ENCODE measurements at regions of chr19 and their contacts with region 1.

Region 1: DNA sequence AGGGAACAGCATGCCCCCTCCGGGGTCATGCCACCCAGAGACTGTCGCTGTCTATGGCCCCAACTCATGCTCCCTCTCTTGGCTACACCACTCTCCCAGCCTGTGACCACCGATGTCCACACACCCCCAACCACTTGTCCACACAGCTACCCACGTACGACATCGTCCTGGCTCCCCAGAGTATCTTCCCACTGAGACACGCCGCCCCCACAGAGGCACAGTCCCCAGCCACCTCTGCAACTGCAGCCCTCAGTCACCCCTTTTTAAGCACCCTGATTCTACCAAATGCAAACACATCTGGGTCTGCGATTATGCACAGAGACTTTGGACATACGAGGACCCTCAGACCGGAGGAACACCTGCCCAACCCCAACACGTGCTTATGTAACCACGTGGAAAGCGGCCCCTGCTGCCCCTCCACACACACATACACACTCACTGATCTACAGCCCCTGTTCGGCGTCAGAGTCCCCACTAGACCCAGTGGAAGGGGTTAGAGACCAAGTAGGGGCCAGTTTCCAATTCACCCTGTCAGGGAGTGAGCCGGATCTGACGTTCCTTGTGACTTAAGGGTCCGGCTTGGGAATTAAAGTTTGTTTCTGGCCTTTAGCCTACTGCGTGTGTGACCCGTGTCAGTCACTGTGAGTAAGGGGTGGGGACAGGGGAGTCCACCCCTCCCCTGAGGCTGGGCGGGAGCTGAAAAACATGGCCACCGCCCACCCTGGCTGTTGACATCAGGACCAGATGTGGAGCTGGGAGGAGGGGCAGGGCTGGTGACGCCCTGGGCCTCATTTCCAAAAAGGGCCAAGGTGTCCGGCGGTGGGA is 11.9 kb upstream of the AXL start:
- DNase-seq: no peak
- ATAC-seq: no peak
- H3K4me3 ChIP-seq: no peak overlapping the region
- H3K4me3 Mint-ChIP-seq: no peak overlapping the region
- H3K27ac ChIP-seq: no peak overlapping the region
- H3K27ac Mint-ChIP-seq: no peak overlapping the region
- H3K4me1 ChIP-seq: no peaks in the 10 kb centered on the region
- H3K4me1 Mint-ChIP-seq: peaks cover 1 to 27% (median 11%) of the 10 kb centered on the region in 3 donors
- H3K27me3 ChIP-seq: peaks cover 0 to 14% of the 10 kb centered on the region in 2 experiments
- H3K27me3 Mint-ChIP-seq: peaks cover 0 to 2% of the 10 kb centered on the region in 2 donors

Region 2: GRCh38 chr19:41278478-41278877 is 71.3 kb after region 1 on chr19:
- CTCF ChIA-PET with region 1: interaction called in 1 of 2 experiments, 13 read pairs
- POLR2A ChIA-PET with region 1: no interaction called
- DNase-seq: no peak
- ATAC-seq: no peak
- H3K4me3 ChIP-seq: no peak overlapping the region
- H3K4me3 Mint-ChIP-seq: no peak overlapping the region
- H3K27ac ChIP-seq: no peak overlapping the region
- H3K27ac Mint-ChIP-seq: no peak overlapping the region
- H3K4me1 ChIP-seq: no peaks in the 10 kb centered on the region
- H3K4me1 Mint-ChIP-seq: peaks cover 3 to 10% (median 9%) of the 10 kb centered on the region in 3 donors
- H3K27me3 ChIP-seq: no peaks in the 10 kb centered on the region
- H3K27me3 Mint-ChIP-seq: no peaks in the 10 kb centered on the region

Region 3: DNA sequence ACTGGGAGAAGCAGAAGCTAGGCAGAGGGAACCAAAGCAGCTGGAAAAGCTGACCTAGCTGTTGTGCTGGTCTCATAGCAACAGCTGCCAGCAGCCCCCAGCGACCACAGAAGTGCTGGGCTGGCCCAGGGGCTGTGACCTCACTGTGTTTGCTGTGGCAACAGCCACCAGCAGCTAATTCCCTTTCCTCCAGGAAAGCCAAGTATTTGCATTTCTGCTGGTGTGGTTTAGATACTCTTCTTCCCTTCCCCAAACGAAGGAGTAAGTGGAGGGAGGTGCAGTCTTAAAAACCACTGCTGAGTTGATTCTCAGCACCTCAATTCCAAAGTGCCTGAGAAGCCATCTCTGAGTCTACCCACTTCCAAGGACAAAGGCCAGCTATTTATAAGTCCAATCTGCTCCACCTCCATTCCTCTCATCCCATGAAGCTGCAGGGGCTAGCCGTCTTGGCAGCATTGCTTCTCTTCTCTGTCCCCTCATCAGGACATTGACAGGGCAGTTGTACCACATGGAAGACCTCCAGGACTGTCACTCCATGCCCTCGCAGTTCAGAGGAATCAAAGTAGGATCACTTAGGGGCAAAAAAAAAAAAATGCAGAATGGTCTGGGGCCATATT is 91.3 kb after region 1 on chr19:
- CTCF ChIA-PET with region 1: interaction called, 7 to 11 read pairs
- POLR2A ChIA-PET with region 1: interaction called in 1 of 2 experiments, 4 read pairs
- DNase-seq: peak in 28 of 35 experiments; percentile 16 to 70 (median 48)
- ATAC-seq: peak in 2 of 4 experiments; percentile 16 to 59
- H3K4me3 ChIP-seq: no peak overlapping the region
- H3K4me3 Mint-ChIP-seq: peak overlapping the region in 2 of 3 donors; percentile 34 to 48
- H3K27ac ChIP-seq: peak overlapping the region; percentile 97
- H3K27ac Mint-ChIP-seq: peak overlapping the region; percentile 96 to 99
- H3K4me1 ChIP-seq: peaks cover 38 to 72% of the 10 kb centered on the region in 2 experiments
- H3K4me1 Mint-ChIP-seq: peaks cover 89 to 94% (median 90%) of the 10 kb centered on the region in 3 donors
- H3K27me3 ChIP-seq: no peaks in the 10 kb centered on the region
- H3K27me3 Mint-ChIP-seq: no peaks in the 10 kb centered on the region

Region 4: DNA sequence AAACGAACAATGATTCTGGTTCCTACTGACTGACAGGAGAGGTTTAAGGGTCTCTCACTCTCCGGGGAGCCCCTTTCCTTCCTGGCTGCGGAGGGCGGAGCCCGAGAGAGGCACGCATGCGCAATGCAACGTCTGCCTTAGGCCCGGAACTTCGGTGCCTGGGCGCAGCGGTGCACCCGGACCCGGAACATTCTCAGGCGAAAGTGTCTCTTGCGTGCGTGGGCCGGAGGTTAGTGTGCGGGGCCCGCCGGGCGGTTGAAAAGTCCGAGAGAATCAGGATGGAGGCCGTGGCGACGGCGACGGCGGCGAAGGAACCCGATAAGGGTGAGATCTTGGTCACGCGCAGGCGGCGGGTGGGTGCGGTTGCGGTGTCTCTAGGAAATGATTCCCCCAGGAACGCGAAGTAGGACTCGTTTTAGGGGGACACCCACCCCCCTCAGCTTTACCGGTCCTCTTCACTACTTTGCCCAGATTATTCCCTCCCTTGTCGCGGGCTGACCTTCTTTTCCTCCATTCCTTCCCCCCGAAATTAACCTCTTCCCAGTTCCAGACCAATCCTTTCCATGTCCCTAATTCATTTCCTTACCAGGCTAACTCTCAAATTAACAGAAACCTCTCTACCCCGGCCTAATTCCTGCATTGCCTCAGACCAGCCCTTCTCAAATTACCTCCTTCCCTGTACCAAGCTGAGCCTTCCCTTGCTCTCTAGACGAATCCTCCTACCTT is 103.1 kb after region 1 on chr19 and contains the start of gene CCDC97:
- CTCF ChIA-PET with region 1: interaction called, 6 to 14 read pairs
- POLR2A ChIA-PET with region 1: interaction called, 3 read pairs
- DNase-seq: peak; percentile 73 to 94 (median 85)
- ATAC-seq: peak; percentile 66 to 72 (median 70)
- H3K4me3 ChIP-seq: peak within 1 kb of the TSS; percentile 96 to 99
- H3K4me3 Mint-ChIP-seq: peak within 1 kb of the TSS; percentile 90 to 98 (median 95)
- H3K27ac ChIP-seq: peak within 1 kb of the TSS; percentile 97
- H3K27ac Mint-ChIP-seq: peak within 1 kb of the TSS; percentile 96 to 99
- H3K4me1 ChIP-seq: peaks cover 45 to 75% of the 10 kb centered on the region in 2 experiments
- H3K4me1 Mint-ChIP-seq: peaks cover 79 to 86% (median 83%) of the 10 kb centered on the region in 3 donors
- H3K27me3 ChIP-seq: no peaks in the 10 kb centered on the region
- H3K27me3 Mint-ChIP-seq: no peaks in the 10 kb centered on the region
- total RNA-seq, gene CCDC97: 38.9 to 61.5 (median 55.1) TPM

Region 5: GRCh38 chr19:41439441-41440222 is 232.5 kb after region 1 on chr19 and contains the start of gene DMAC2:
- CTCF ChIA-PET with region 1: interaction called in 1 of 2 experiments, 11 read pairs
- POLR2A ChIA-PET with region 1: no interaction called
- DNase-seq: peak; percentile 82 to 98 (median 93)
- ATAC-seq: peak; percentile 98 to 99 (median 99)
- H3K4me3 ChIP-seq: peak within 1 kb of the TSS; percentile 92 to 96
- H3K4me3 Mint-ChIP-seq: no peak within 1 kb of the TSS
- H3K27ac ChIP-seq: peak within 1 kb of the TSS; percentile 78
- H3K27ac Mint-ChIP-seq: peak within 1 kb of the TSS; percentile 5 to 14
- H3K4me1 ChIP-seq: peaks cover 5 to 15% of the 10 kb centered on the region in 2 experiments
- H3K4me1 Mint-ChIP-seq: peaks cover 0 to 19% (median 8%) of the 10 kb centered on the region in 3 donors
- H3K27me3 ChIP-seq: peaks cover 0 to 5% of the 10 kb centered on the region in 2 experiments
- H3K27me3 Mint-ChIP-seq: peaks cover 0 to 2% of the 10 kb centered on the region in 2 donors
- total RNA-seq, gene DMAC2: 19.5 to 33.9 (median 24.7) TPM

Region 6: GRCh38 chr19:42066075-42066754 is 859.1 kb after region 1 on chr19:
- CTCF ChIA-PET with region 1: no interaction called
- POLR2A ChIA-PET with region 1: no interaction called
- DNase-seq: no peak
- ATAC-seq: no peak
- H3K4me3 ChIP-seq: no peak overlapping the region
- H3K4me3 Mint-ChIP-seq: no peak overlapping the region
- H3K27ac ChIP-seq: no peak overlapping the region
- H3K27ac Mint-ChIP-seq: no peak overlapping the region
- H3K4me1 ChIP-seq: peaks cover 0 to 15% of the 10 kb centered on the region in 2 experiments
- H3K4me1 Mint-ChIP-seq: no peaks in the 10 kb centered on the region
- H3K27me3 ChIP-seq: peaks cover 0 to 74% of the 10 kb centered on the region in 2 experiments
- H3K27me3 Mint-ChIP-seq: peaks cover 7 to 11% of the 10 kb centered on the region in 2 donors

Measured in T-cell (primary cell).